SK-N-SH (cell line): ENCODE measurements at regions of chr10 and their contacts with region 1.

Region 1: DNA sequence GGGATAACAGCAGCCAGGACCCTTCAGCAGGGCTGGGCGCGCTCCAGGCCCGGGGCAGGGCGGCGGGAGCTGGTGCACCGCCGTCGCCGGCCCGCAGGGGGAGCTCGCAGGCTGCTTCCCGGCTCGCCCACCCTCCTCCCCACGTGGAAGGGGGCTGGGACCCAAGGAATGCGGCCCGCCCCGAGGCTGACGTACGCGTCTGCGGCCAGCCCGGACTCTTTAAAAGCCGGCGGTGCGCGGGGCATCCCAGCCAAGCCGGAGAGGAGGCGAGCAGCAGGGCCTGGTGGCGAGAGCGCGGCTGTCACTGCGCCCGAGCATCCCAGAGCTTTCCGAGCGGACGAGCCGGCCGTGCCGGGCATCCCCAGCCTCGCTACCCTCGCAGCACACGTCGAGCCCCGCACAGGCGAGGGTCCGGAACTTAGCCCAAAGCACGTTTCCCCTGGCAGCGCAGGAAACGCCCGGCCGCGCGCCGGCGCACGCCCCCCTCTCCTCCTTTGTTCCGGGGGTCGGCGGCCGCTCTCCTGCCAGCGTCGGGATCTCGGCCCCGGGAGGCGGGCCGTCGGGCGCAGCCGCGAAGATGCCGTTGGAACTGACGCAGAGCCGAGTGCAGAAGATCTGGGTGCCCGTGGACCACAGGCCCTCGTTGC is at the start of gene PFKFB3:
- DNase-seq: peak; percentile 98
- H3K4me3 ChIP-seq: peak within 1 kb of the TSS; percentile 74 to 79
- H3K27ac ChIP-seq: peak within 1 kb of the TSS; percentile 64 to 95
- H3K4me1 ChIP-seq: peaks cover 9 to 16% of the 10 kb centered on the region in 2 experiments; a peak in 3 of 4 replicates
- H3K27me3 ChIP-seq: no peaks in the 10 kb centered on the region
- CTCF ChIP-seq: peak; percentile 85
- EP300 ChIP-seq: peak in 1 of 2 experiments; percentile 42; a peak in 1 of 4 replicates
- RAD21 ChIP-seq: peak; percentile 81
- polyA plus RNA-seq, gene PFKFB3: 33.0 and 59.7 TPM in 2 replicates

Region 2: GRCh38 chr10:6088721-6089390 is 114.0 kb before region 1 on chr10 and contains the start of gene RBM17:
- CTCF ChIA-PET with region 1: interaction called, 17 read pairs
- POLR2A ChIA-PET with region 1: no interaction called
- DNase-seq: peak; percentile 96
- H3K4me3 ChIP-seq: peak within 1 kb of the TSS; percentile 89 to 90
- H3K27ac ChIP-seq: peak within 1 kb of the TSS; percentile 36 to 63; a peak in 3 of 4 replicates
- H3K4me1 ChIP-seq: peaks cover 13% of the 10 kb centered on the region in 2 experiments; a peak in 3 of 4 replicates
- H3K27me3 ChIP-seq: 0 out of 2 replicates have a peak, but pooled peaks cover 6% of the 10 kb centered on the region
- CTCF ChIP-seq: peak; percentile 100
- EP300 ChIP-seq: no peak
- RAD21 ChIP-seq: peak; percentile 62
- polyA plus RNA-seq, gene RBM17: 32.6 and 34.2 TPM in 2 replicates

Region 3: DNA sequence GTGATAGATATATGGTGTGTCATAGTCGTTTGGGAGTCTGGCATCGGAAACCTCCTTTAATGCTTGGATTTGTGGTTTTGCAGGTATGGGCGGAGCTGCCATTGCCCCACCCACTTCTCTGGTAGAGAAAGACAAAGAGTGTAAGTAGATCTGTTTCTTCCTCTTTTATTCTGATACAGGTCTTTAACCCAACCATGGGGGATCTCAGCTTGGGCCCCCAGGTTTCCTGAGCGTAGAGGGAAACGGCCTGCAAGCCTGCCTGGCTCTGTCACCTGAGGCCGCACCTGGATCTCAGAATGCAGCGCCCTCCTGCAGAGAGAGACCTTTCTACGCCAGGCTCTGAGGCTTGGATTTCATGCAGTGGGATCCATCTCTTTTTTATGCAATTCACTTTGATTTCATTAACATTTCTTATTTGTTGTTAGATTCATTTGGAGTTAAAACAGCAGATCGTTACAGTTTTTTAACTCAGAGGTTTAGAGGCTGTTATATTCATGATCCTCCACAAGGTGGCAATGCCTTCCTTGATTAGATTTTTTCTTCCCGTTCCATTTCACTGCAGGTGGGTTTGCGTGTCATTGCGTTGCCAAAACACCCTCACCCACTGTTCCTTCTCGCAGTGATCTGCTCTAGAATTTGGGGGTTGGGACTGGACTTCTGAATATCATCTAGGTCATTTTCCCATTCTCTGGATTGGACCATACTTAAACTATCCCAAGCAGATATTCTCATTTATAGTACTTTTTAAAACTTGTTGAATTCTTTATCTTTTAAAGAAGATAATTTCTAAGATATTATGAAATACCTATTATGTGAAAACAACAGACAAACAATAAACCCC is 94.0 kb before region 1 on chr10:
- CTCF ChIA-PET with region 1: interaction called, 15 read pairs
- POLR2A ChIA-PET with region 1: no interaction called
- DNase-seq: peak; percentile 64
- H3K4me3 ChIP-seq: no peak overlapping the region
- H3K27ac ChIP-seq: no peak overlapping the region
- H3K4me1 ChIP-seq: no peaks in the 10 kb centered on the region
- H3K27me3 ChIP-seq: no peaks in the 10 kb centered on the region
- CTCF ChIP-seq: peak; percentile 80
- EP300 ChIP-seq: no peak
- RAD21 ChIP-seq: peak; percentile 73

Region 4: GRCh38 chr10:6176691-6177231 is 26.0 kb before region 1 on chr10:
- CTCF ChIA-PET with region 1: interaction called, 11 read pairs
- POLR2A ChIA-PET with region 1: interaction called, 3 read pairs
- DNase-seq: peak; percentile 6
- H3K4me3 ChIP-seq: no peak overlapping the region
- H3K27ac ChIP-seq: peak overlapping the region in 1 of 2 experiments; percentile 34; a peak in 1 of 4 replicates
- H3K4me1 ChIP-seq: peaks cover 0 to 6% of the 10 kb centered on the region in 2 experiments; a peak in 2 of 4 replicates
- H3K27me3 ChIP-seq: no peaks in the 10 kb centered on the region
- CTCF ChIP-seq: no peak
- EP300 ChIP-seq: no peak
- RAD21 ChIP-seq: no peak

Region 5: DNA sequence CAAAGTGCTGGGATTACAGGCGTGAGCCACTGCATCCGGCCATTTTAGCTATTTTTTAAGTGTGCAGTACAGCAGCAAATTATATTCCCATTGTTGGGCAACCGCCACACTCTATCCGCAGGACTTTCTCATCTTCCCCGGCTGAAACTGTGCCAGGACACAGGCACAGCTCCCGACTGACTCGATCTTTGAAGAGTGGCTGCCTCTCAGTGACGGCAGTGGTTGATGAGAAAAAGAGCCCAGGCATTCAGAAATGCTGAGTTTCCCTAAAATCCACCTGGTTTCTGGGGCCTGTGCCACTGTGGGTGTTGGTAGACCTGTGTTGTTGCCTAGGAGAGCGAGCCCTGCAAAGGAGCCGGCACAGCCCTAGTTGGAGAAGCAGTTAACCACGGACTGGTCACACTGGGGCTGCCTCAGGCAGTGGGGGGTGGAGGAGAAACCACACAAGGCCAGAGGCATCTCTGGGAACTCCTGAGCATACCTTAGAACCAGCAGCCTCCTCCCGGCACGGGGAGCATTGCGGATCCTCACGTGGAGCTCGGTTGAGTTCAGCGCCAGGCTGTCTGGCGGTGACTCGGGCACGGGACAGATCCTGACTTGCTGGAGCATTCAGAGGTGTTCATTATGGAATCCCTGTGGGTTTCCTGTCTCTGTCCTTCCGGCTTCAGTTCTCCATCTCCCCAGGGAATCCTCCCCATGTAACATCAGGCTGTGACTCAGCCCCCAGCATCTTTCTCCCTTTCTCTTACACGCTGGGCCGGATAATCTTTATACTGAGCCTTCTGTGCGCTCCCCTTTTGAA is 16.1 kb after region 1 on chr10:
- CTCF ChIA-PET with region 1: interaction called, 23 read pairs
- POLR2A ChIA-PET with region 1: interaction called, 3 read pairs
- DNase-seq: no peak
- H3K4me3 ChIP-seq: no peak overlapping the region
- H3K27ac ChIP-seq: peak overlapping the region in 1 of 2 experiments; percentile 61; a peak in 2 of 4 replicates
- H3K4me1 ChIP-seq: peaks cover 0 to 27% of the 10 kb centered on the region in 2 experiments; a peak in 3 of 4 replicates
- H3K27me3 ChIP-seq: no peaks in the 10 kb centered on the region
- CTCF ChIP-seq: no peak
- EP300 ChIP-seq: no peak
- RAD21 ChIP-seq: no peak

Region 6: DNA sequence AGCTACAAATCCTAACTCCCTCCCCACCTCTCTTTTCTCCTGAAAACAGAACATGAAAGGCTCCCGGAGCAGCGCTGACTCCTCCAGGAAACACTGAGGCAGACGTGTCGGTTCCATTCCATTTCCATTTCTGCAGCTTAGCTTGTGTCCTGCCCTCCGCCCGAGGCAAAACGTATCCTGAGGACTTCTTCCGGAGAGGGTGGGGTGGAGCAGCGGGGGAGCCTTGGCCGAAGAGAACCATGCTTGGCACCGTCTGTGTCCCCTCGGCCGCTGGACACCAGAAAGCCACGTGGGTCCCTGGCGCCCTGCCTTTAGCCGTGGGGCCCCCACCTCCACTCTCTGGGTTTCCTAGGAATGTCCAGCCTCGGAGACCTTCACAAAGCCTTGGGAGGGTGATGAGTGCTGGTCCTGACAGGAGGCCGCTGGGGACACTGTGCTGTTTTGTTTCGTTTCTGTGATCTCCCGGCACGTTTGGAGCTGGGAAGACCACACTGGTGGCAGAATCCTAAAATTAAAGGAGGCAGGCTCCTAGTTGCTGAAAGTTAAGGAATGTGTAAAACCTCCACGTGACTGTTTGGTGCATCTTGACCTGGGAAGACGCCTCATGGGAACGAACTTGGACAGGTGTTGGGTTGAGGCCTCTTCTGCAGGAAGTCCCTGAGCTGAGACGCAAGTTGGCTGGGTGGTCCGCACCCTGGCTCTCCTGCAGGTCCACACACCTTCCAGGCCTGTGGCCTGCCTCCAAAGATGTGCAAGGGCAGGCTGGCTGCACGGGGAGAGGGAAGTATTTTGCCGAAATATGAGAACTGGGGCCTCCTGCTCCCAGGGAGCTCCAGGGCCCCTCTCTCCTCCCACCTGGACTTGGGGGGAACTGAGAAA is 30.3 kb after region 1 on chr10:
- CTCF ChIA-PET with region 1: interaction called, 40 read pairs
- POLR2A ChIA-PET with region 1: no interaction called
- DNase-seq: peak; percentile 12
- H3K4me3 ChIP-seq: no peak overlapping the region
- H3K27ac ChIP-seq: no peak overlapping the region
- H3K4me1 ChIP-seq: no peaks in the 10 kb centered on the region
- H3K27me3 ChIP-seq: no peaks in the 10 kb centered on the region
- CTCF ChIP-seq: no peak
- EP300 ChIP-seq: no peak
- RAD21 ChIP-seq: no peak

Region 7: GRCh38 chr10:6297522-6298381 is 94.9 kb after region 1 on chr10:
- CTCF ChIA-PET with region 1: no interaction called
- POLR2A ChIA-PET with region 1: no interaction called
- DNase-seq: no peak
- H3K4me3 ChIP-seq: no peak overlapping the region
- H3K27ac ChIP-seq: peak overlapping the region in 1 of 2 experiments; percentile 61; a peak in 2 of 4 replicates
- H3K4me1 ChIP-seq: peaks cover 6 to 33% of the 10 kb centered on the region in 2 experiments
- H3K27me3 ChIP-seq: no peaks in the 10 kb centered on the region
- CTCF ChIP-seq: no peak
- EP300 ChIP-seq: no peak
- RAD21 ChIP-seq: no peak